A549 (cell line): ENCODE measurements at regions of chr17 and their contacts with region 1.

Region 1: DNA sequence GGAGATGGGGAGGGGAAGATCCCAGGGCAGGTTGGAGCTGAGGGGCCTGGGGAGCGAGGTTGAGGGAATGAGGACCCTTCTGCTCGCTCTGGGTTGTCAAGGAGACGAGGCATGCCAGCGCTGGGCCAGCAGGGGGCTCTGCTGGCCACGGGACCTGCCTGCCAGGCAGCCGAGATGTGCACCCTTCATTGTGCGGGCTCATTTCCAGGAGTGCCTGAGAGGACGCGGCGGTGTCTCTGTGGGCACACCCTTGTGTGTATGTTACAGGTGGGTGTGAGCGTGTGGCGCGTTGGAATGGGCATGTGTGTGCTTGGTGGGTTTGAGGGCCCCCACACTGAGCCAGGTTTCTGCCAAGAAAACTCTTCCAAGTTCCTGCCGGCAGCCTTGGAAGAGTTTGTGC is 15.9 kb downstream of the ARHGAP23 start:
- DNase-seq: peak; percentile 71 to 91
- ATAC-seq: peak; percentile 91 to 97
- H3K4me3 ChIP-seq: no peak overlapping the region
- H3K27ac ChIP-seq: peak overlapping the region in 1 of 2 experiments; percentile 59; a peak in 2 of 6 replicates
- H3K4me1 ChIP-seq: peaks cover 29% of the 10 kb centered on the region
- CTCF ChIP-seq: peak; percentile 96
- EP300 ChIP-seq: no peak
- POLR2A ChIP-seq: no peak
- RAD21 ChIP-seq: peak; percentile 98 to 99

Region 2: DNA sequence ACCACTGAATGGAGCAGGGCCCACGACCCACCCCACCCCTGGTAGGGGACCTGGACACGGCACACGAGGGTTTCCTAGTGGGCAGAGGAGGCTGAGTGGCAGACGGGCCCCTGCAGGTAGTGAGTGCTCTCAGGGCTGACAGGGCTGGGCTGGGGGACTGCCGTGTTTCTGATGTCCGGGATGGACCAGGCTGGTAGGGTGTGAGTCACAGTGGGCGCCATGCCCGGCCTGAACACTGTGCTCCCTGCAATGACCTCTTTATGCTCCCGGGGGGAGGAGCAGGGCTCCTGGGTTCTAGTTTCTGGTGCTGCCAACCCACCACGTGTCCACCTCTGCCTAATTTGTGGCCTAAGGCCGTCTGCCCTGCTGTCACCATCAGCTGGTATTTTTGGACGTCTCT is 10.4 kb after region 1 on chr17:
- CTCF ChIA-PET with region 1: interaction called, 30 read pairs
- POLR2A ChIA-PET with region 1: no interaction called
- DNase-seq: peak; percentile 79 to 97
- ATAC-seq: peak; percentile 65 to 84
- H3K4me3 ChIP-seq: peak overlapping the region; percentile 60
- H3K27ac ChIP-seq: peak overlapping the region; percentile 78 to 96
- H3K4me1 ChIP-seq: peaks cover 61% of the 10 kb centered on the region
- CTCF ChIP-seq: no peak
- EP300 ChIP-seq: no peak
- POLR2A ChIP-seq: no peak
- RAD21 ChIP-seq: no peak

Region 3: DNA sequence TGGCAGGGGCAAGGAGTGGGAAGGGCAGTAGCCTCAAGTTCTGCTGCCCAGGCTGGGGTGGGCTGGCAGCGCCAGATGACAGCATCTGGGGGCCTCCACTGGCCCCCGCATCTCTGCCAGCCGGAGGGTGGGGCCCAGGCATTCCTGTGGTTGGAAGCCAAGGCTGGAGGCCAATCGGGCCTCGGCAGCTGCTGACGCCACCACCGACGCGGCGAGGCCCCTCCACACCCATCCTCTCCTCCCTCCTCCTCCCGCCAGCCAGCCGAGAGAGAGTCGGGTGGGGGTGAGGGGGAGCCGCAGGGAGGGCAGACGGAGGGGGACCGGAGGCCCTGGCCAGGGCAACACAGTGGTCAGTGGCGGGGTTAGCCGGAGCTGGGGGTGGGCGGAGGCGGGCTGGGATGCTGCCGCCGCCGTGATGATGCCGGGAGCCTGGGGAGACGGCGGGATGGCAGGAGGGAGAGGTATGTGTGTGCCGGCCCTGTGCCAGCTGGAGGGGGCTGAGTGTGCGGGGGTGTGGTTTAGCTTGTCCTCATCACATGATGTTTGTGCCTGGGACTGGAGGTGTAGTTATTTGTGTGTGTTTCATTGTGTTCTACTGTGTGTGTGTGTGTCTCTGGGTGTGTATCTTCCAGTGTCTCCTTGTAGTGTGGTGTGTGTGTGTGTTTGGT is 20.7 kb after region 1 on chr17:
- CTCF ChIA-PET with region 1: interaction called, 24 read pairs
- POLR2A ChIA-PET with region 1: no interaction called
- DNase-seq: peak; percentile 81
- ATAC-seq: peak; percentile 77 to 85
- H3K4me3 ChIP-seq: peak overlapping the region; percentile 43
- H3K27ac ChIP-seq: peak overlapping the region; percentile 77 to 88
- H3K4me1 ChIP-seq: peaks cover 35% of the 10 kb centered on the region
- CTCF ChIP-seq: no peak
- EP300 ChIP-seq: no peak
- POLR2A ChIP-seq: no peak
- RAD21 ChIP-seq: no peak

Region 4: DNA sequence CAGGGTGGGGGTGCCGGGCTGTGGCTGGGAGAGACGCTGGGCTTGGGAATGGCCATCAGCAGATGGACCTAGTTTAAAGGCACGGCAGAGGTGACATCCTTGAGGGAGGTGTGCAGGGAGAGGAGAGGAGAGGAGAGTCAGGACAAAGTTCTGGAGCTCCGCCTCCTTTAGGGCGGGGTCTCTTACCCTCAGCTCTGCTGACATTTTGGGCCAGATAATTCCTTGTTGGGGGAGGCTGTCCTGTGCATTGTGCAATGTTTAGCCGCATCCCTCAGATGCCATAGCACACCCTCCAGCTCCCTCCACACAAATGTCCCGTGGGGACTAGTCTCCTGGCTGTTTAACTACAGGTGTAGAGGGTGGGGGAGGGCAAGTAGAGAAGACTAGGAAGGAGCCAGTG is 32.4 kb after region 1 on chr17:
- CTCF ChIA-PET with region 1: interaction called, 59 read pairs
- POLR2A ChIA-PET with region 1: interaction called, 4 read pairs
- DNase-seq: no peak
- ATAC-seq: no peak
- H3K4me3 ChIP-seq: no peak overlapping the region
- H3K27ac ChIP-seq: no peak overlapping the region
- H3K4me1 ChIP-seq: peaks cover 13% of the 10 kb centered on the region
- CTCF ChIP-seq: no peak
- EP300 ChIP-seq: no peak
- POLR2A ChIP-seq: no peak
- RAD21 ChIP-seq: no peak